Endothelial cell of umbilical vein (primary cell): ENCODE measurements at regions of chr1 and their contacts with region 1.

Region 1: GRCh38 chr1:38818175-38818976 is 41.2 kb downstream of the RRAGC start:
- DNase-seq: no peak
- H3K4me3 ChIP-seq: no peak overlapping the region
- H3K27ac ChIP-seq: no peak overlapping the region
- H3K4me1 ChIP-seq: peaks cover 4% of the 10 kb centered on the region
- H3K27me3 ChIP-seq: peaks cover 43 to 67% of the 10 kb centered on the region in 2 experiments
- CTCF ChIP-seq: peak; percentile 62 to 85
- POLR2A ChIP-seq: no peak

Region 2: DNA sequence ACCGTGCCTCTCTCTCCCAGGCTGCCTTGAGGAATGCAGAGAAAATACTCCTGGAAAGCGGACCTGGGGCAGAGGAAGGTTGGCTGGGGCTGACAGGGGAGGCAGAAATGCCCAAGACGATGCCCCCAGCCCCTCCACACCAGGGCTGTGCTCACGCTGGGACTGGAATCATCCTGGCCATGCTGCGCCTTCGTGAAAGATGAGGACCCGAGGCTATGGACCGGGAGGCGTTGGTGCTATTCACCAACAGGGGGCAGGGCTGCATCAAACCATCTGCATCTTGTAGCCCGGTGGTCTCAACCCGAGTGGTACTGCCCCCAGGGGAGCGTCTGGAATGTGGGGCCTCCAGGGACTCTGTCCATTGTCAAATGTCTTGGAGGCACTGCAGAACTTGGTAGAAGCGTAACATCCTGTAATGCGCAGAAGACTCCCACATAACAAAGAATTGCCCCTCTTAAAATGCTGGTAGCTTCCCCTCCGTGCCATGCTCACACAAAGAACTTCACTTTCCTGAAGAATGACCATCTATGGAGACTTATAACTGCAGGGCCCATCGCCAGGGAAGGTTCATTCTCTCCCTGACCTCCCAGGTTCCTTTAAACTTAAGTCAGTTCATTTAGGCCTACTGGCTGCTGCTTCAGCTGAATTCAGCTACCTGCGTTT is 210.0 kb before region 1 on chr1:
- CTCF ChIA-PET with region 1: interaction called, 27 read pairs
- POLR2A ChIA-PET with region 1: no interaction called
- dilution Hi-C with region 1: no loop called
- intact Hi-C with region 1: loop called (anchors 1 kb)
- DNase-seq: peak; percentile 32
- H3K4me3 ChIP-seq: no peak overlapping the region
- H3K27ac ChIP-seq: no peak overlapping the region
- H3K4me1 ChIP-seq: no peaks in the 10 kb centered on the region
- H3K27me3 ChIP-seq: no peaks in the 10 kb centered on the region
- CTCF ChIP-seq: peak; percentile 57 to 84
- POLR2A ChIP-seq: no peak